ENCODE measurements at regions of chr4 and their contacts with region 1.

Region 1: DNA sequence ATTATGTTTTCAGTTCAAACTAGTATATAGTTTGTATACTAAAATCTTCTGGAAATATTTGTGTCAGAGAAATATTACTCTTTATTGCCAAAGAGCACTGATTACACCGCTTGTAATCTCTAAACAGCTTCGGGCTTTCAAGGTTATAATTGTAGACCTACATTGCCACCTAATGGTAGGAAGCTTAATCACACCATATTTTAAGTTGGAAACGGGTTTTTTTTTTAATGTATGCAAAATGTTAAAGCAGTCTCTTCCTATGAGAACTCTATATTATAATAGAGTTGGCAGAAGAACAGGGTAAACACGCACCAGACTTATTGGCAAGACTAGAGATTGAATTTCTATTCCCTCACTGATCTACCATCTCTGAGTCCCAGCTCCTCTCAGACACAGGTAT is 19.5 kb upstream of the NFXL1 start:
- DNase-seq: peak; percentile 58
- ATAC-seq: no peak
- H3K4me3 ChIP-seq: no peak overlapping the region
- H3K27ac ChIP-seq: no peak overlapping the region
- H3K4me1 ChIP-seq: peaks cover 11% of the 10 kb centered on the region
- H3K27me3 ChIP-seq: no peaks in the 10 kb centered on the region
- CTCF ChIP-seq: peak; percentile 62

Region 2: GRCh38 chr4:47704693-47705325 is 229.0 kb before region 1 on chr4:
- CTCF ChIA-PET with region 1: interaction called, 3 read pairs
- POLR2A ChIA-PET with region 1: no interaction called
- intact Hi-C with region 1: loop called (anchors 10 kb)
- DNase-seq: peak; percentile 38
- ATAC-seq: peak; percentile 80
- H3K4me3 ChIP-seq: no peak overlapping the region
- H3K27ac ChIP-seq: no peak overlapping the region
- H3K4me1 ChIP-seq: no peaks in the 10 kb centered on the region
- H3K27me3 ChIP-seq: 0 out of 2 replicates have a peak, but pooled peaks cover 3% of the 10 kb centered on the region
- CTCF ChIP-seq: peak; percentile 54

Region 3: DNA sequence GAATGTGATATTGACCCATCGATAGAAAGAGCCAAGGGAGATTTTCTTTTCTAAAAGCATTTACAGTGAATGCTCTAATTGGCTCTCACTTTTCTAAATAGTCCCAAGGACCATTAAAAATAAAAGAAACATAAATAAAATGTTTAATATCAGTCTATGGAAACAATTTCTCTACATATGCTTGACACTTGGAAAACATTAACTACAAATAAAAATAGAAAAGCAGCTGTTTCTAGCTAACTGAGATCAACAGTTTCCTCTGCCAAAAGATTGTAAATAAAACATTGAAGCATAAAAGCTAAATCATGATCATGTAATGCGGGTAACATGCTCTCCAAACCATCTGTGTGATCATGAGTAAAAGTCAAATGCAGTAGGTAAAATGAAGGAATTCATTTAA is 145.7 kb before region 1 on chr4:
- CTCF ChIA-PET with region 1: no interaction called
- POLR2A ChIA-PET with region 1: no interaction called
- intact Hi-C with region 1: no loop called
- DNase-seq: no peak
- ATAC-seq: no peak
- H3K4me3 ChIP-seq: no peak overlapping the region
- H3K27ac ChIP-seq: no peak overlapping the region
- H3K4me1 ChIP-seq: no peaks in the 10 kb centered on the region
- H3K27me3 ChIP-seq: peaks cover 25% of the 10 kb centered on the region
- CTCF ChIP-seq: no peak

Region 4: GRCh38 chr4:47899639-47900038 is 34.2 kb before region 1 on chr4:
- CTCF ChIA-PET with region 1: no interaction called
- POLR2A ChIA-PET with region 1: no interaction called
- intact Hi-C with region 1: no loop called
- DNase-seq: no peak
- ATAC-seq: no peak
- H3K4me3 ChIP-seq: no peak overlapping the region
- H3K27ac ChIP-seq: no peak overlapping the region
- H3K4me1 ChIP-seq: no peaks in the 10 kb centered on the region
- H3K27me3 ChIP-seq: no peaks in the 10 kb centered on the region
- CTCF ChIP-seq: no peak

Measured in PC-3 (cell line).